Kidney (tissue), 22 donors: ENCODE measurements at regions of chr3 and their contacts with region 1.

Region 1: GRCh38 chr3:195909644-195910508 is 1.5 kb upstream of the TNK2 start:
- DNase-seq: peak; percentile 87 to 95 (median 93)
- H3K4me3 ChIP-seq: peak overlapping the region; percentile 61 to 75 (median 64)
- H3K27ac ChIP-seq: no peak overlapping the region
- H3K4me1 ChIP-seq: peaks cover 0 to 25% (median 9%) of the 10 kb centered on the region in 3 donors
- H3K27me3 ChIP-seq: no peaks in the 10 kb centered on the region
- CTCF ChIP-seq: no peak

Region 2: GRCh38 chr3:195863121-195864006 is 46.5 kb before region 1 on chr3:
- intact Hi-C with region 1: loop called (anchors 10 kb)
- DNase-seq: peak; percentile 86 to 96 (median 90)
- H3K4me3 ChIP-seq: no peak overlapping the region
- H3K27ac ChIP-seq: no peak overlapping the region
- H3K4me1 ChIP-seq: peaks cover 0 to 6% (median 0%) of the 10 kb centered on the region in 3 donors
- H3K27me3 ChIP-seq: no peaks in the 10 kb centered on the region
- CTCF ChIP-seq: peak; percentile 92

Region 3: GRCh38 chr3:196232154-196232881 is 322.4 kb after region 1 on chr3:
- intact Hi-C with region 1: no loop called
- DNase-seq: no peak
- H3K4me3 ChIP-seq: no peak overlapping the region
- H3K27ac ChIP-seq: no peak overlapping the region
- H3K4me1 ChIP-seq: peaks cover 0 to 6% (median 0%) of the 10 kb centered on the region in 3 donors
- H3K27me3 ChIP-seq: no peaks in the 10 kb centered on the region
- CTCF ChIP-seq: no peak